ENCODE measurements at regions of chr2 and their contacts with region 1.

Region 1: DNA sequence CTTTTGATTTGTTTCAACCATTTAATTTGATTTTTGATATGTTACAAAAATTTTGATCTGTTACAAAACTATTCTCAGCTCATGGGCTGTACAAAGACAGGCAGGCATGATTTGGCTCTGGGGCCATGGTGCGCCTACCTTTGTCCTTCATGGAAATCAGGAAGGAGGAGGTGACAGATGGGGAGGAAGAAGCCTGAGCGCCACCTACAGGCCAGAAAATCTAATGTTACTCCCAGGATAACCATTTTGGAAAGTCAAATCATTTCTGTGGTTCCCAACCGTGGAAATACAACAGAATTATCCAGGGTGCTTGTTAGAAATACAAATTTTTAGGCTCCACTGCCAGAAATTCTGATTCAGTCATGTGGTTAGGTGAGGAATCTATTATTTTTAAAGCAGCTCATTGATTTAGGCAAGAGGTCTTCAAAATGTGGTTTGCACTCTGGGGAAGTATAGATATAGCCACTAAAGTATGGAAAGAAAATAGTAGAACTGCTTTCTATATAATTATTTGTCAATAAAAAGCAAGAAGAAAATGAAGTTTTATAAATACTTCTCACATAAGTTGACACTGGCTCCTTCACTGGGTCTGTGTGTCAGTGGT is 93.9 kb downstream of the EVA1A start:
- DNase-seq: peak; percentile 22
- H3K4me3 ChIP-seq: peak overlapping the region in 1 of 2 experiments; percentile 37; a peak in 1 of 4 replicates
- H3K27ac ChIP-seq: no peak overlapping the region
- H3K4me1 ChIP-seq: peaks cover 0 to 6% of the 10 kb centered on the region in 2 experiments; a peak in 3 of 4 replicates
- H3K27me3 ChIP-seq: no peaks in the 10 kb centered on the region
- CTCF ChIP-seq: peak; percentile 65
- EP300 ChIP-seq: no peak
- RAD21 ChIP-seq: peak; percentile 34; the same call in 1 of the 2 replicates

Region 2: GRCh38 chr2:75480971-75481836 is 14.4 kb after region 1 on chr2:
- CTCF ChIA-PET with region 1: interaction called, 105 read pairs
- POLR2A ChIA-PET with region 1: no interaction called
- DNase-seq: peak; percentile 30
- H3K4me3 ChIP-seq: no peak overlapping the region
- H3K27ac ChIP-seq: no peak overlapping the region
- H3K4me1 ChIP-seq: peaks cover 2 to 7% of the 10 kb centered on the region in 2 experiments; a peak in 3 of 4 replicates
- H3K27me3 ChIP-seq: no peaks in the 10 kb centered on the region
- CTCF ChIP-seq: peak; percentile 37
- EP300 ChIP-seq: no peak
- RAD21 ChIP-seq: peak; percentile 34

Region 3: GRCh38 chr2:75560768-75561565 is 94.2 kb after region 1 on chr2 and contains the start of gene EVA1A:
- CTCF ChIA-PET with region 1: interaction called, 15 read pairs
- POLR2A ChIA-PET with region 1: no interaction called
- DNase-seq: peak; percentile 66
- H3K4me3 ChIP-seq: peak within 1 kb of the TSS; percentile 58 to 92
- H3K27ac ChIP-seq: peak within 1 kb of the TSS; percentile 72 to 95
- H3K4me1 ChIP-seq: peaks cover 8 to 34% of the 10 kb centered on the region in 2 experiments
- H3K27me3 ChIP-seq: no peaks in the 10 kb centered on the region
- CTCF ChIP-seq: no peak
- EP300 ChIP-seq: no peak
- RAD21 ChIP-seq: no peak
- polyA plus RNA-seq, gene EVA1A: 79.0 and 93.0 TPM in 2 replicates

Region 4: GRCh38 chr2:75608684-75609333 is 142.0 kb after region 1 on chr2:
- CTCF ChIA-PET with region 1: interaction called, 238 read pairs
- POLR2A ChIA-PET with region 1: no interaction called
- DNase-seq: peak; percentile 80
- H3K4me3 ChIP-seq: peak overlapping the region; percentile 16 to 37; a peak in 3 of 4 replicates
- H3K27ac ChIP-seq: no peak overlapping the region
- H3K4me1 ChIP-seq: peaks cover 8 to 43% of the 10 kb centered on the region in 2 experiments
- H3K27me3 ChIP-seq: no peaks in the 10 kb centered on the region
- CTCF ChIP-seq: peak; percentile 99
- EP300 ChIP-seq: no peak
- RAD21 ChIP-seq: peak; percentile 88

Region 5: DNA sequence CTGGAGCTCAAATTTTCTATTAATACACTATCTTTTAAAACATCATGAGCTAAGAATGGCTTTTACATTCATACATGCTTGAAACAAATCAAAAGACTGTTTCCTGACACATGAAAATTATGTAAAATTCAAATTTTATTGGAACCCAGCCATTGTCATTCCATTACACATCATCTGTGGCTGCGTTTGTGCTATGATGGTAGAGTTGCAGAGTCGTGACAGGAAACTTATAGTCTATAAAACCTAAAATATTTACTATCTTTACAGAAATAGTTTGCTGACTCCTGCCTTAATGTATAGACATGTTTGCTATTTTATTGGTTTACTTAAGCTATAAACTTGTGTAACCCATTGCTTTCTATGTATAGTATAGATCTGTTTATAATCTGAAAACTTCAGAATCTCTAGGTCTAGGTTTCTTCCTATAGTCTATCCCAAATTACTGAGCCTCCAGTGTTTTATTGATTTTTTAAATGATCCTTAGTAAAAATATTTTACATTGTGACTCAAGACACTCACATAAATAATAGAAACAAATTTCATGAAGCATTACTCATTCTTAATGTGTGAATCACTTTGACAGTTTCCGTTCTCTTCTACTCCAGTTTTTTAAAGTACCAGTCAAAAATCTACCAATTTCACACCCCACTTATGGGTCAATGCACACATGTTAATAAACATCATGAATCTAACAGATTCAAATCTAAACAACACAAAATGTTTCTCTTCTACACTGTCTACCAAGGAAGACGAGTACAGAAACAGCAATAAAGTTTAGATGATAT is 153.3 kb after region 1 on chr2:
- CTCF ChIA-PET with region 1: interaction called, 73 read pairs
- POLR2A ChIA-PET with region 1: no interaction called
- DNase-seq: no peak
- H3K4me3 ChIP-seq: no peak overlapping the region
- H3K27ac ChIP-seq: peak overlapping the region in 1 of 2 experiments; percentile 52; a peak in 2 of 4 replicates
- H3K4me1 ChIP-seq: no peaks in the 10 kb centered on the region; a peak in 1 of 4 replicates
- H3K27me3 ChIP-seq: no peaks in the 10 kb centered on the region
- CTCF ChIP-seq: no peak
- EP300 ChIP-seq: peak in 1 of 2 experiments; percentile 9; a peak in 1 of 4 replicates
- RAD21 ChIP-seq: no peak

Region 6: DNA sequence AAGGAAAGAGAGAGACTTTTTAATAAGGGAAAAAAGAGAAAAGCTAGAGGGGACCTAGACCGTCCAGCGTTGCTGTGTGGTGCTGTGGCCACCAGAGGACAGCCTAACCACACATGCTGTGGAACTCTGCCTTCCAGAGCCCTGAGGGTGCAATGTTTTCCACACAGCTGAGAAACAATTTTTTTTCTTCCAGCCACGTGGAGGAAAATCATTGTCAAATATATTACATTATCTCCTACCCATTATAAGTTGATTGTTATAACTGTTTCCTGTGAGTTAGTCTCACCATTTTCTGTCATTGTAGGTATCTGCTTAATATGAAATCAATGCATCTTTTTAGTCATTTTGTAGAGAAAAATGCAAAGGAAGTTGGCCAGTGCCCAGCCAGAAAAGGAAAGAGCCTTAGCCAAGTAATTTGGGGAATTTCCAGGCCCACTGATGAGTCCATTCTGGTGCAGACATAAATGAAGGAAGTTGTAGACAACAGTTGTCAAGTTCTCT is 173.9 kb after region 1 on chr2:
- CTCF ChIA-PET with region 1: interaction called, 37 read pairs
- POLR2A ChIA-PET with region 1: no interaction called
- DNase-seq: peak; percentile 66
- H3K4me3 ChIP-seq: peak overlapping the region in 1 of 2 experiments; percentile 42; a peak in 1 of 4 replicates
- H3K27ac ChIP-seq: peak overlapping the region; percentile 17 to 74; a peak in 3 of 4 replicates
- H3K4me1 ChIP-seq: peaks cover 0 to 9% of the 10 kb centered on the region in 2 experiments; a peak in 2 of 4 replicates
- H3K27me3 ChIP-seq: no peaks in the 10 kb centered on the region; the same call in 1 of the 2 replicates
- CTCF ChIP-seq: peak; percentile 99
- EP300 ChIP-seq: peak in 1 of 2 experiments; percentile 43; a peak in 2 of 4 replicates
- RAD21 ChIP-seq: peak; percentile 97